PC-3 (cell line): ENCODE measurements at regions of chr6 and their contacts with region 1.

Region 1: DNA sequence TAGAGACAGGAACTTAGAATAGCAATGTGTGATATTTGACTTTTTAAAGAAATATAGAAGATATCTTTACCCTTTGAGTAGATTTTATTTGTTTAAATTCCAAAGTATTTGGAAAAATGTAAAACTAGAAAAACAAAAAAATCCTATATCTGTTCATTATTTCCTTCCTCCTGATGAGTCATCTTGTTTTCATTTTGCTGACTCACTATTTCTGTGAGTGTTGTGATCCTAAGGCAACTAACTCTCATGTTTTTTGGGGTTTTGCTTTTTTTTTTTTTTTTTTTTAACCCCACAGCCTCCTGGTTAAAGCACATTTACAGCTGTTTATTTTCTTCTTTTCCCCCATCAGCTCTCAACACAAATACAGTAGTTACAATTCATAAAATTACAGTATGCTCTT is 37.8 kb upstream of the THEMIS start:
- DNase-seq: peak; percentile 71
- ATAC-seq: peak; percentile 65
- H3K4me3 ChIP-seq: peak overlapping the region; percentile 35; the same call in 1 of the 2 replicates
- H3K27ac ChIP-seq: peak overlapping the region; percentile 87
- H3K4me1 ChIP-seq: peaks cover 24% of the 10 kb centered on the region
- H3K27me3 ChIP-seq: no peaks in the 10 kb centered on the region
- CTCF ChIP-seq: no peak

Region 2: DNA sequence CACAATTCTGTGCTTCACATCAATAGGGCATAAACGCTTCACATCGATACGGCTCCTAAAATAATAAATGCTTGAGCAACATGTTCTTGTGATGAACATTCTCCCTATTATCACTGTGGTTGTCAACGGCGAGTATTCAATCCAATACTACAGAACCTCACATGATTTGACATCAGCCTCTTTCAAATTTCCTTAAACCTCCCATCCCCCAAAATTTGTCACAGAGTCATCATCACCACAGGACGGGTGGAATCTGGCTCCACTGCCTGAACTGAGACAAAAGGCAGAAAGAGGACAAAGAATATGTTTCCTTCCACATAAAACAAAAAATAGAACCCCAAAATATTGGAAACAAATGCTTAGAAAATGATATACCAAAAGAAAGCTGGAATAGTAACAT is 45.2 kb before region 1 on chr6:
- CTCF ChIA-PET with region 1: no interaction called
- POLR2A ChIA-PET with region 1: no interaction called
- intact Hi-C with region 1: no loop called
- DNase-seq: no peak
- ATAC-seq: no peak
- H3K4me3 ChIP-seq: no peak overlapping the region
- H3K27ac ChIP-seq: no peak overlapping the region
- H3K4me1 ChIP-seq: no peaks in the 10 kb centered on the region
- H3K27me3 ChIP-seq: no peaks in the 10 kb centered on the region
- CTCF ChIP-seq: no peak

Region 3: GRCh38 chr6:128277379-128277778 is 338.7 kb after region 1 on chr6:
- CTCF ChIA-PET with region 1: no interaction called
- POLR2A ChIA-PET with region 1: interaction called, 15 read pairs
- intact Hi-C with region 1: no loop called
- DNase-seq: no peak
- ATAC-seq: no peak
- H3K4me3 ChIP-seq: no peak overlapping the region
- H3K27ac ChIP-seq: no peak overlapping the region
- H3K4me1 ChIP-seq: peaks cover 21% of the 10 kb centered on the region
- H3K27me3 ChIP-seq: no peaks in the 10 kb centered on the region
- CTCF ChIP-seq: no peak